Gastrocnemius medialis (tissue), 4 donors: ENCODE measurements at regions of chr17 and their contacts with region 1.

Region 1: DNA sequence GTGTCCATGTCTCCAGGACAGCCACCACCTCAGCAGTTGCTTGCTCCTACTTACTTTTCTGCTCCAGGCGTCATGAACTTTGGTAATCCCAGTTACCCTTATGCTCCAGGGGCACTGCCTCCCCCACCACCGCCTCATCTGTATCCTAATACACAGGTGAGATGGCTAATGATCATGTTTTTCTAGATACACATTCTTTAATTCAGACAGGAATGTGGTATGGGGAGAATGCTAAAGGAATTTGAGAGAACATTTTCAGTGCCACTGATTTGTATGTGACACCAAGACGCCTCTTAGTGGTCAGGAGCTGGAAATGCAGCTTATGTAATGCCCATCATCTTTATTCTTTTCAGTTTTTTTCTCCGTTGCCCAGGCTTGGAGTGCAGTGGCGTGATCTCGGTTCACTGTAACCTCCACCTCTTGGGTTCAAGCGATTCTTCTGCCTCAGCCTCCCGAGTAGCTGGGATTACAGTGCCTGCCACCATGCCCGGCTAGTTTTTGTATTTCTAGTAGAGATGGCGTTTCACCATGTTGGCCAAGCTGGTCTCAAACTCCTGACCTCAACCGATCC is 8.9 kb upstream of the RAPGEFL1 start:
- DNase-seq: no peak
- ATAC-seq: peak; percentile 76 to 81
- H3K4me3 ChIP-seq: no peak overlapping the region
- H3K27ac ChIP-seq: peak overlapping the region in 3 of 4 donors; percentile 11 to 48 (median 48)
- H3K4me1 ChIP-seq: no peaks in the 10 kb centered on the region
- H3K27me3 ChIP-seq: no peaks in the 10 kb centered on the region
- CTCF ChIP-seq: peak; percentile 76 to 84 (median 81)
- POLR2A ChIP-seq: no peak

Region 2: GRCh38 chr17:40019140-40019991 is 149.0 kb before region 1 on chr17:
- in situ Hi-C with region 1: no loop called
- intact Hi-C with region 1: loop called (anchors 5 kb)
- DNase-seq: peak; percentile 84 to 94
- ATAC-seq: peak; percentile 44 to 45
- H3K4me3 ChIP-seq: peak overlapping the region in 2 of 4 donors; percentile 54 to 64
- H3K27ac ChIP-seq: peak overlapping the region; percentile 87 to 99 (median 94)
- H3K4me1 ChIP-seq: peaks cover 78 to 85% of the 10 kb centered on the region in 2 donors
- H3K27me3 ChIP-seq: no peaks in the 10 kb centered on the region
- CTCF ChIP-seq: peak in 4 of 5 experiments; percentile 25 to 39 (median 35)
- POLR2A ChIP-seq: peak; percentile 60 to 67

Region 3: DNA sequence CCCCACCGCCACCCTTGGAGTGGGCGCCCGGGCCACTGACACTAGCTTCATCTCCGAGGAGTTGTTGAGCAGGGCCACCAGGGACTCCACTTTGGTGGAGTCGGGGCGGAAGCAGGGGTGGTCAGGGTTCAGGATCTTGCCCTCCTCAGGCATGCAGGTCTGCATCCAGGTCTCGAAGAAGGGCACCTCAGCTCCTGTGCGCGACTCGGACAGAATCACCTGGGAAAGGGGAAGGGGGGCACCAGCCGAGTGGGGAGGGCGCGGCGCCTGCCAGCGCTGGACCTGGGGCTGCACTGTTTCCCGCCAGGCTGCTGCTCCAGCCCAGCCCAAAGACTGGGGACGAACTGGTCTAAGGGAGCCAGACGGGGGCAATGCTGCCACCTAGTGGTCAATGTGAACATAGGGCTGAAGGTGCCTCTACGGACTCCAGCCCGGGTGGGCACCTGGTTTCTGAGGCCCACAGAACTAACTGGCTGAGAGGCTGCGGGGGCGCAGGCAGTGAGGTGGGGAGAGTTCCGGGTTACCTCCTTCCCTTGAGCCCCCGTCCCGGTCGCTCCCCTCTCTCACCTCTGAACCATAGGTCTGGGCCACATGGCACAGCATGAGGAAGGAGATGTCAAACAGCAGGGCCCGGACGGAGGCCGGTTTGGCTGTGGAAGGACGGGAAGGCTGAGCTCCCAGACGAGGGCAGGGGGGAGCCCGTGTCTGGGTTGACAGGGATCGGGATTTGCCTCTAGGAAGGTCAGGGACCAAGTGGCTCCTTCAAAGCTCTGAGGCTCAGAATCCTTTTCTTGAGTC is 141.3 kb before region 1 on chr17:
- in situ Hi-C with region 1: loop called in 1 of 4 experiments (anchors 25 kb)
- intact Hi-C with region 1: no loop called
- DNase-seq: peak; percentile 76 to 81
- ATAC-seq: peak; percentile 79 to 80
- H3K4me3 ChIP-seq: no peak overlapping the region
- H3K27ac ChIP-seq: peak overlapping the region; percentile 71 to 99 (median 94)
- H3K4me1 ChIP-seq: peaks cover 46 to 53% of the 10 kb centered on the region in 2 donors
- H3K27me3 ChIP-seq: no peaks in the 10 kb centered on the region
- CTCF ChIP-seq: peak; percentile 93 to 98 (median 96)
- POLR2A ChIP-seq: no peak

Region 4: GRCh38 chr17:40041196-40041595 is 127.2 kb before region 1 on chr17:
- in situ Hi-C with region 1: loop called in 2 of 4 experiments (anchors 10 to 25 kb)
- intact Hi-C with region 1: no loop called
- DNase-seq: no peak
- ATAC-seq: no peak
- H3K4me3 ChIP-seq: no peak overlapping the region
- H3K27ac ChIP-seq: no peak overlapping the region
- H3K4me1 ChIP-seq: peaks cover 13 to 16% of the 10 kb centered on the region in 2 donors
- H3K27me3 ChIP-seq: no peaks in the 10 kb centered on the region
- CTCF ChIP-seq: no peak
- POLR2A ChIP-seq: no peak

Region 5: DNA sequence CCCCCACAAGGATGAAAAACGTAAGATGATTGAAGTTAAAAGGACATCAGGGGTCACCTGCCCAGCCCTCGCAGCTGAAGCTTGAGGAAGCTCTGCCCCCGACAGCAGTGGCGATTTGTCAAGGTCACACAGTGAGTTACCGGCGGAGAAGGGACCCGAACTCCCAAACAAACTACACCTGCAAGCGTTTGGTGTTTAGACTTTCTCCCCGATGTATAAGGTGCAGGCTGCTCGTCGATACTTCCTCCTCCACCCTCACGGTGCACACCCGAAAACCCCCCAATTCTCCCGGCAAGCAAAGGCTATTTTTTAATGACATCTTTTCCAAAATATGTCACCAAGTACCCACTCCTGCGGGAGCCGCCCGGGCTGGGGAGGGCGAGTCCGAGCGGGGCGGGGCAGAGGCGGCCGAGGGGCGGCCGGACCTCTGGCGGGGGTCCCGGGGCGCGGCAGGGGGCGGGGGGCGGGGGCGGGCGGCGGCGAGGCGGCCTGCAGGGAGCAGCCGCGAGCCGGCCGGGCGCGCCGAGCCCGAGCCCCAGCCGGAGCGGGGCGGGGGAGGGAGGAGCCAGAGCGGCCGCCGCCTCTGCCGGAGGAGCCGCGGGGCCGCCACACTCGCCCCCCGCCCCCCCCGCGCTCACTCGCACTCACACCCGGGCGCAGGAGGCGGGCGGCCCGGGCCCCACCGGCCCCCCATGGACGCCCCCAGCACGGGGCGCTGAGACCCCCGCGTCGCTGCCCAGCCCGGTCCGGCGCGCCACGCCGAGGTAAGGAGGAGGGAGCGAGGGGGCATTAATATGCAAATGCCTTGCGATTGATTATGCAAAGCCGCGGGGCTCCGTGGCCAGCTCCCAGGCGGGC is 105.8 kb before region 1 on chr17 and contains the start of gene THRA:
- in situ Hi-C with region 1: no loop called
- intact Hi-C with region 1: loop called (anchors 5 kb)
- DNase-seq: peak; percentile 55 to 67
- ATAC-seq: peak; percentile 59 to 61
- H3K4me3 ChIP-seq: peak within 1 kb of the TSS; percentile 84 to 100 (median 96)
- H3K27ac ChIP-seq: peak within 1 kb of the TSS; percentile 100
- H3K4me1 ChIP-seq: peaks cover 38 to 47% of the 10 kb centered on the region in 2 donors
- H3K27me3 ChIP-seq: no peaks in the 10 kb centered on the region
- CTCF ChIP-seq: peak in 2 of 5 experiments; percentile 26 to 27
- POLR2A ChIP-seq: peak; percentile 73 to 85
- total RNA-seq, gene THRA: 42.2 to 71.6 (median 48.2) TPM

Region 6: DNA sequence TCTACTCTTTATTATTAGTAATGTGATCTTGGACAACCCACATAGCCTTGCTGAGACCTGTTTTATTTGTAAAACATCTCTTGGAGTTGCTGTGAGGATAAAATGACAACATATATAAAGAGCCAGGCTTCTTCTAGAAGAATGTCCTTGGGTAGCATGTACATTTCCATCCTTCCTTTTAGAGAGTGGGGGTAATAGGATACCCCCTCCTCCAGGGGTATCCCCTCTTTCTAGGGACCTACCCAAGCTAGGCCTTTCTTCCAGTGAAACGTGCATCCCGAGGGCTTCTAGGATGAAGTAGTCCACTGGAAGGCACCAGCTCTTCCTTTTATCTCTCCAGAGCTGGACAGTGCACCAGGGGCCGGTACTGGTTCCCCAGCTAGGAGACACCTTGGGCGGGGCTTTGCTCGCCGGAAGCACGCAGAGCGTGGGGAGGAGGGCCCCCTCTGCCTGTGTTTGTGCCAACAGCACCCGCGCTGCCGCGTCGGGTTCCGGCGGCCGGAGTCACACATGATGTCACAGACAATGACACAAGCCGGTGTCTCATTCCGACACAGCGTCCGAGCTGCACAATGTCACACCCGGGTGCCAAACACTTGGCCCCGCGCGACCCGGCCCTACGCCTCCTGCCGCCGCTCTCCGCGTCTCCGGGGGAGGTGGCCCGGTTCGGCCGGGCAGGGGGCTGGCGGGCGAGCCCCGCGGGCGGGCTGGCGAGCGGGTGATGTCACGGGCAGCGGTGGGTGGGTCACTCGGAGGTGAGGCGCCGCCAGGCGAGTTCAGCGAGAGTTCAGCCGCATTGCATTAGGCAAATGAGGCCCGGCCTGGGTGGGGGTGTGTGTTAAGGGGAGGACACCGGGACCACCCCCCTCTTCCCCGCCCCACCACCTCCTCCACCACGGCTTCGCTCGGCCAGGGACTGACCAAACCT is 172.8 kb after region 1 on chr17:
- in situ Hi-C with region 1: no loop called
- intact Hi-C with region 1: no loop called
- DNase-seq: peak; percentile 91 to 97
- ATAC-seq: peak; percentile 77
- H3K4me3 ChIP-seq: peak overlapping the region; percentile 70 to 81 (median 76)
- H3K27ac ChIP-seq: peak overlapping the region; percentile 95 to 100 (median 98)
- H3K4me1 ChIP-seq: peaks cover 75 to 86% of the 10 kb centered on the region in 2 donors
- H3K27me3 ChIP-seq: no peaks in the 10 kb centered on the region
- CTCF ChIP-seq: no peak
- POLR2A ChIP-seq: peak; percentile 86 to 91